ENCODE measurements at regions of chr17 and their contacts with region 1.

Region 1: GRCh38 chr17:7014261-7014994 is 2.0 kb downstream of the RNASEK start:
- DNase-seq: peak; percentile 93
- ATAC-seq: peak; percentile 93
- H3K4me3 ChIP-seq: peak overlapping the region; percentile 93
- H3K27ac ChIP-seq: peak overlapping the region; percentile 93
- H3K4me1 ChIP-seq: peaks cover 30% of the 10 kb centered on the region
- H3K27me3 ChIP-seq: no peaks in the 10 kb centered on the region
- CTCF ChIP-seq: peak; percentile 39; the same call in 1 of the 2 replicates

Region 2: DNA sequence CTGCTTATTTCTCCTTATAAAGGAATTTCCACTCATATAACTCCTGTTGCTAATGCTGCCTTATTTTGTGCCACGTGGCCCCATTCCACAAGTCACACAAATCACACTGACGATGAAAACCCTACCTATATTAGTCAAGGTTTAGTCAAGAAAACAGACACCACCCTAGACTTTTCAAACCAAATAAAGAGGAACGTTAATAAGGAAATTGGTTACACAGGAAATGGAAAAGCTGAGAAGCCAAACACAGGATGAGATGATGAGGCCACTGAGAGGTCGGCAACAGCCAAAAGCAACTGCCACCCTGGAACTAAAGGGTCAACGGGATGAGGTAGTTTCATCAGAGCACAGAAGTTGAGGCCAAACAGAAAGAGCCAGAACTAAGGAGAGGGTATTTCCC is 65.9 kb before region 1 on chr17:
- CTCF ChIA-PET with region 1: no interaction called
- POLR2A ChIA-PET with region 1: no interaction called
- intact Hi-C with region 1: no loop called
- DNase-seq: peak; percentile 44
- ATAC-seq: peak; percentile 49
- H3K4me3 ChIP-seq: no peak overlapping the region
- H3K27ac ChIP-seq: peak overlapping the region; percentile 48
- H3K4me1 ChIP-seq: peaks cover 17% of the 10 kb centered on the region
- H3K27me3 ChIP-seq: no peaks in the 10 kb centered on the region
- CTCF ChIP-seq: no peak

Region 3: DNA sequence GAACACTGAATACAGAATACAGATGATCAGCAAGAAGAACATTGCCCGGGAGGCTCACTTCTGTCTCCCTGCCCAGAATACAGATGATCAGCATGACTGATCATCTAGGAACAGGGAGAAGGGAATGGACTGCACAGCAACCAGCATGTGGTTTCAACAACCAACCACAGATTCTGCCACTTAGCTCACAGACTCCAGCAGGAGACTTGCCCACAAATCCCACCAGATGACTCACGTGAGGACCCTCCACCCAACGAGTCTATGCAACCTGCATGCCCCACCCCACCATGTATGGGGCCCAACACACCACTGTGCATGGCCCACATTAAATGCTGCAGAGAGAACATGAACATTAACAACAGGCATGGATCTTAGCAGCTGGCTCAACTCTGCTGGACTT is 54.7 kb before region 1 on chr17:
- CTCF ChIA-PET with region 1: interaction called, 11 read pairs
- POLR2A ChIA-PET with region 1: no interaction called
- intact Hi-C with region 1: no loop called
- DNase-seq: no peak
- ATAC-seq: no peak
- H3K4me3 ChIP-seq: no peak overlapping the region
- H3K27ac ChIP-seq: no peak overlapping the region
- H3K4me1 ChIP-seq: no peaks in the 10 kb centered on the region
- H3K27me3 ChIP-seq: no peaks in the 10 kb centered on the region
- CTCF ChIP-seq: no peak